Spleen (tissue), 13 donors: ENCODE measurements at regions of chr16 and their contacts with region 1.

Region 1: GRCh38 chr16:75486676-75487313 is 8.4 kb downstream of the CHST6 start:
- DNase-seq: no peak
- H3K4me3 ChIP-seq: no peak overlapping the region
- H3K27ac ChIP-seq: no peak overlapping the region
- H3K4me1 ChIP-seq: peaks cover 0 to 9% (median 0%) of the 10 kb centered on the region in 6 donors
- H3K27me3 ChIP-seq: peaks cover 0 to under 1% (median 0%) of the 10 kb centered on the region in 7 donors
- CTCF ChIP-seq: no peak
- POLR2A ChIP-seq: no peak

Region 2: DNA sequence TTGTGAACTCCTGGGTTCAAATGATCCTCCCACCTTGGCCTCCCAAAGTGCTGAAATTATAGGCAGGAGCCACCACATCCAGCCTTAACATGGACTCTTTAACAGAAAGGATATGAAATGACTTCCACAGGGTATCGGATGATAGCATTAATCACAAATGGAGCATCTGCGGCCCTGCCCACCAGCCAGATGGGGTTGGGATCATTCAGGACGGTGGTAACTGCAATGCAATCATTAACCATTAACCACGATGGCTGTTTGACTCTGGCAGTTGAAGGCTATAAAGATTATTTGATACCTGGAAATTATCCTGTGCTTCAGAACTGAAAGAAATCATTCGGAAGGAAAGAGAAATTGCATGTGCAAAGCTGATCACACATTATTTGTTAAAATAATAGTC is 54.4 kb after region 1 on chr16:
- intact Hi-C with region 1: loop called (anchors 10 kb)
- DNase-seq: no peak
- H3K4me3 ChIP-seq: no peak overlapping the region
- H3K27ac ChIP-seq: no peak overlapping the region
- H3K4me1 ChIP-seq: no peaks in the 10 kb centered on the region
- H3K27me3 ChIP-seq: no peaks in the 10 kb centered on the region
- CTCF ChIP-seq: no peak
- POLR2A ChIP-seq: no peak

Region 3: DNA sequence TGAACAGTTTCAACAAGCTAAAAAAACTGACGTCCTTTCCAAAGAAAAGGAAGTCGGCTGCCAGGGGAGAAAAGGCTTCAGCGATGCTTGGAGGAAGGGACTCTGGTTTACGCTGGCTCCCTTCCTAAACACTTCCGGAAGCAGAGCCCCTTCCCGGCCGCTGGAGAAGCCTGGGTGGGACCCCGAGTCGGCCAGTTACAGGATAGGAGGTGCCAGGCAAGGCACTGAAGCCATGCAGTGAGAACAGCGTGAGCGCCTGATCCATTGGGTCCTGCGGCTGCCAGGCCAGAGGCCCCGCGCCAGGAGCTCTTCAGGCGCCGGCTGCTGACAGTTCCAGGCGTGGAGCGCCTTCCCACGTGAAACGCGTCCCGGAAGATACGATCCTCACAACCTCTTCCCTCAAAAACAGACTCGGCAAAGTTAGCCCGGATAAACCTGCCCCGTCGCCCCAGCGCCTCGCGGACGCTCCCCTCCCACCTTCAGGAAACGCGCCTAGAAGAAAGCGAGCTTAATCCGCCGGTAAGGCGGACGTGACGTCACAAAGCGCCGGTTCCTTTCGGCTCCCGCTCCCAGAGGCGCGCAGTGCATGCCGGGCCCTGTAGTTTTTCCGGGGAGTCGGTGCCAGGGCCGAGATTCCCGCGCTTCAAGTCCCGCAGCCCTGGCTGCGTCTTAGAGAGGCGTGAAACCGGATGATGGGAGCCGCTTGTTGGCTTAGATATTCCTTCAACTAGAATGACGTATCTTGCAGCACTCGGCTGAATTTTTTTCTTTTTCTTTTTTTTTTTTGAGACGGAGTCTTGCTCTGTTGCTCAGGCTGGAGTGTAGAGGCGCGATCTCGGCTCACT is 136.2 kb after region 1 on chr16 and contains the start of gene ADAT1:
- intact Hi-C with region 1: no loop called
- DNase-seq: peak; percentile 100
- H3K4me3 ChIP-seq: peak within 1 kb of the TSS; percentile 62 to 94 (median 78)
- H3K27ac ChIP-seq: peak within 1 kb of the TSS; percentile 89 to 97 (median 94)
- H3K4me1 ChIP-seq: peaks cover 14 to 62% (median 46%) of the 10 kb centered on the region in 6 donors
- H3K27me3 ChIP-seq: no peaks in the 10 kb centered on the region
- CTCF ChIP-seq: peak in 3 of 11 experiments; percentile 17 to 47 (median 38)
- POLR2A ChIP-seq: peak; percentile 58 to 80 (median 74)
- total RNA-seq, gene ADAT1: 42.5 to 120 (median 65.5) TPM

Region 4: DNA sequence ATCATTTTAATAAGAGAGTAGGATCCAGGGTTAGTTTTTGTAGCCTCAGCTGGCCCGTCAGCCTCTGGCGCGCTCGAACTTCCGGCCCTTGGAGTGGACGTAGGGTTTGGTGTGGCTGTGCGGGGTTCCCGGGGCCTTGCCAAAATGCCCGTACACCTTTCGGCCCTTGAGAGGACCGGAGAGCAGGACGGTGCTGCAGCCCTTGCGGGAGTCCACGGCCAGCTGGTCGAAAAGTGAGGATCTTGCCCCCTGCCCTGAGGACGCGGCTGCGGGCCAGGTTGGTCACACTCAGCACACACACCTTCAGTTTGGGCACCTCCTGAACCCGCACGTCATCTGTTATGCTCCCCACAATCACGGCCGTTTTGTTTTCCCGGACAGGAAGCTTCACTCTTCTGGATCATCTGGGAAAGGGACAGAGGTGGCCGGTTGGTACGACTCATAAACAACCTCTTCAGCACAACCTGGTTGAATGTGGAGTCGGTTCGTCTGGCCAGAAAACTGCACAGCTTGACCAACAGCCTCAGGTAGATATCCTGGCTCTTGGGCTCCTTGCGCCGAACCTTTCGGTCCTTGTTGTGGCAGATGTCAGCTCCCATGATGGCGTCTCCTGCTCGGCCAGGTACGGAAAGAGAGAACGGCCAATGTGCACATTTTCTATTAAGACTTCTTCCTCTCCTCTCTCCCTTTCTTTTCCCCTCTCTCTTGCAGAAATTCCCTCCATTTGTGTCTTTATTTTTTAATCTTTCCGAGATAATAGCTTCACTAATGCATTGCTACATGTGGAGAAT is 748.4 kb after region 1 on chr16:
- intact Hi-C with region 1: no loop called
- DNase-seq: no peak
- H3K4me3 ChIP-seq: no peak overlapping the region
- H3K27ac ChIP-seq: no peak overlapping the region
- H3K4me1 ChIP-seq: no peaks in the 10 kb centered on the region
- H3K27me3 ChIP-seq: no peaks in the 10 kb centered on the region
- CTCF ChIP-seq: no peak
- POLR2A ChIP-seq: no peak